GM23248 (cell line): ENCODE measurements at regions of chr19 and their contacts with region 1.

Region 1: GRCh38 chr19:4803736-4804695 is 12.5 kb downstream of the FEM1A start:
- DNase-seq: peak; percentile 62
- H3K4me3 ChIP-seq: no peak overlapping the region
- H3K27ac ChIP-seq: no peak overlapping the region
- H3K4me1 ChIP-seq: no peaks in the 10 kb centered on the region
- H3K27me3 ChIP-seq: no peaks in the 10 kb centered on the region

Region 2: DNA sequence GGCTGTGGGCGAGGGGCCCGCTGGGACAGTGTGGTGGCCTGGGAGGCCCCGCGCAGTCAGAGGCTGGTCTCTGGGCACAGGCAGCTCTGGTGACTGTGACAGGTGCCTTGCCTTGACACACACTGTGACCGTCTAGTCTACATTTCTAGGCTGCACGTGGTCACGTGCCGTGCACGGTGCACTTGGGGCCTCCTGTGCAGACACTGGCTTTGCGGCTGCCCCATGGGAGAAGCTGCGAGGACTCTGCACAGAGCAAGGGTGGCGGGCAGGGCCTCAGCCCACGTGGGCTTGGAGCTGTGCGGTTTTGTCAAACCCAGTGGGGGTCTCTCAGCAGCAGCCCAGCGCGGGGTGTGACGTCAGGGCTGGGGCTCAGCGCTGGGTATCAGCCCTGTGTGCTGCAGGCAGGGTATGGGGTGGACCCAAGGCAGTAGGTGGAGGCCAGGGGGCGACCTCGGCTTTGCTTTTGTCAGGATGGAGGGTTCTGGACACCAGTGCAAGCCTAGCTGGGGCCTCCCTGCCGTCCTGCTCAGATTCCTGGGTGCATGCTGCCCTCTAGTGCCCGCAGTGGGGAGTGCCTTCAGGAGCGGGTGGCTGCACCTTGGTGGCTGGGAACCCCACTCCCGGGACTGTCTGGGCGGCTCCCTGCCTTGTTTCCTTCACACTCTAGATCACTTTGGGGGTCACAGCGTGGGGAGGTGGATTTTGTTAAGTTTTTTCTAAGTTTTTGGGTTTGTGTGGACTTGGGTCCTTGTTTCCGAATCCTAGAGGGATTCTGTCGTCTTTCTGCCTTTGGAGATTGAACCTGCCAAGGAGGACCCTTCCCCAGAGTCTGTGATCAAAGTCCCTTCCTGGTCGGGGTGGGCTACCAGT is 227.4 kb after region 1 on chr19:
- in situ Hi-C with region 1: loop called (anchors 10 kb)
- DNase-seq: peak; percentile 83
- H3K4me3 ChIP-seq: no peak overlapping the region
- H3K27ac ChIP-seq: no peak overlapping the region
- H3K4me1 ChIP-seq: peaks cover 10% of the 10 kb centered on the region
- H3K27me3 ChIP-seq: no peaks in the 10 kb centered on the region

Region 3: GRCh38 chr19:5154129-5154798 is 350.2 kb after region 1 on chr19:
- in situ Hi-C with region 1: no loop called
- DNase-seq: peak; percentile 23
- H3K4me3 ChIP-seq: no peak overlapping the region
- H3K27ac ChIP-seq: no peak overlapping the region
- H3K4me1 ChIP-seq: peaks cover 14% of the 10 kb centered on the region
- H3K27me3 ChIP-seq: no peaks in the 10 kb centered on the region